Right cardiac atrium (tissue), 5 donors: ENCODE measurements at regions of chr14 and their contacts with region 1.

Region 1: GRCh38 chr14:23320774-23321571 is at the start of gene PABPN1:
- DNase-seq: peak; percentile 98 to 99 (median 98)
- ATAC-seq: peak; percentile 96
- H3K4me3 ChIP-seq: peak within 1 kb of the TSS; percentile 97
- H3K27ac ChIP-seq: peak within 1 kb of the TSS; percentile 99
- H3K4me1 ChIP-seq: peaks cover 4% of the 10 kb centered on the region
- H3K27me3 ChIP-seq: no peaks in the 10 kb centered on the region
- total RNA-seq, gene PABPN1: 93.6 to 97.9 (median 96.4) TPM

Region 2: GRCh38 chr14:23209651-23210423 is 111.1 kb before region 1 on chr14:
- intact Hi-C with region 1: no loop called
- DNase-seq: no peak
- ATAC-seq: no peak
- H3K4me3 ChIP-seq: no peak overlapping the region
- H3K27ac ChIP-seq: no peak overlapping the region
- H3K4me1 ChIP-seq: no peaks in the 10 kb centered on the region
- H3K27me3 ChIP-seq: no peaks in the 10 kb centered on the region

Region 3: GRCh38 chr14:23406244-23406643 is 85.3 kb after region 1 on chr14:
- intact Hi-C with region 1: no loop called
- DNase-seq: peak in 1 of 3 donors; percentile 31
- ATAC-seq: no peak
- H3K4me3 ChIP-seq: peak overlapping the region; percentile 37
- H3K27ac ChIP-seq: peak overlapping the region; percentile 85
- H3K4me1 ChIP-seq: no peaks in the 10 kb centered on the region
- H3K27me3 ChIP-seq: no peaks in the 10 kb centered on the region

Region 4: DNA sequence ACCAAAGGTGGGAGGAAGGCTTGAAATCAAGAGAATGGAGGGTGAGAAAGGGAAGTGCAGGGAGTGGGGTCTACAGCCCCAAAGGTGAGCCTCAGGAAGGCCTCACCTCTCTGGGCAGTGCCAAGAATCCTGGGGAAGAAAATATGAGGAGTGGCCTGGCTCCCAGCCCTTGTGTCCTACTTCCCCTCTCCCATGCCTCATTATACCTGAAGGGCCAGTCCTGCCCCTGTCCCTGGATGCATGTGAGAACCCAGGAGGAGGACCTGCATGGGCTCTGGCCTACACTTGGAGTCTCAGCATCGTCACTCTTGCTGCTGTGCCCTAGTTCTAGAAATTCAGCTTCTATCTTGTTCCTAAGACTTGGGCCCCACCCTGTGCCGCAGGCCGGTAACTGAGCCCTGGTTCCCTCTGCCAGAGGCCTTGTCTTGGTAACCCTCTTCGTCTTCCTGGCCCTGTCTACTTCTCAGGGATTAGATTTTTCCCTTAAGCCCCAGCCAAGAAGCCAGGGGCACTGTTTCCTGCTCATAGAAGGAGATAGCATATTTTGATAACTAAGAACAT is 125.4 kb after region 1 on chr14:
- intact Hi-C with region 1: loop called in 3 of 4 experiments (anchors 5 to 10 kb)
- DNase-seq: peak in 2 of 3 donors; percentile 70 to 80
- ATAC-seq: peak; percentile 54 to 68
- H3K4me3 ChIP-seq: no peak overlapping the region
- H3K27ac ChIP-seq: peak overlapping the region; percentile 69
- H3K4me1 ChIP-seq: peaks cover 2% of the 10 kb centered on the region
- H3K27me3 ChIP-seq: no peaks in the 10 kb centered on the region

Region 5: GRCh38 chr14:23454445-23454856 is 133.5 kb after region 1 on chr14:
- intact Hi-C with region 1: loop called in 3 of 4 experiments (anchors 5 to 10 kb)
- DNase-seq: no peak
- ATAC-seq: peak in 1 of 2 donors; percentile 11
- H3K4me3 ChIP-seq: no peak overlapping the region
- H3K27ac ChIP-seq: no peak overlapping the region
- H3K4me1 ChIP-seq: no peaks in the 10 kb centered on the region
- H3K27me3 ChIP-seq: no peaks in the 10 kb centered on the region

Region 6: DNA sequence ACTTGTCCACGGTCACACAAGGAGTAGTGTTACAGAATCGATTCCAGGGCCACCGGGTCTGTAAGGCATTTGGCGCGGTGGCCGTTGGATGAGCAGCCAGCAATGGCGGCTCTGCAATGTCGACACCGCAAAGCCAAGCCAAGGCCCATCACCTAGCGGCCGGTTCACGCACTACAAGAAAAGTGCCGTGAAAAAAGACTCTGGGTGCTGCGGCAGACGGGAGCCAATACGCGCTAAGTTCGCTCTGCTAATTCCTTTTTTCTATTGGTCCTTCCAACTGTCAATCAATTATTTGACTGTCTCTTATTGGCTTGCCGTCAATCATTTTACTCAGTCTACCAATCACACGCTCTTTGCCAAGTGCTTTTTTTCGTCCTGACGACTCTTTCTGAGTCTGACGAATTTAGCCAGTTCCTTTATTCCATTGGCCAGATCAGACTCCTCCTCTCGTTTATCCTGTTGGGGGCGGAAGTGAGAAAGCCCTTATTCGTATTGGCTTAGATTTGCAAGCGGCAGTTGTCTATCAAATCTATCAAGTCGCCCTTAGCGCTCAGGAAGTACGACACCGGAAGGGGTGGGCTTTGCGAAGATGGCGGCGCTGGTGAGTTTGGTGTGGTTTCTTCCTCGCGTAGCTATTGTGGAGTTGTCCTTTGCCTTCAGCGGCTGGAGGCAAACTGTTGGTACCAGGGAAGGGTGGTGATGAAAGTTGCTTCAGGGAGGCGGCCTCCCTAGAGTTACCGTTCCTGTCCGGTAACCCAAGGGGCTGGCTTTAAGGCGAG is 148.3 kb after region 1 on chr14 and contains the start of gene NGDN:
- intact Hi-C with region 1: loop called in 1 of 4 experiments (anchors 5 kb)
- DNase-seq: peak; percentile 93 to 98 (median 97)
- ATAC-seq: peak; percentile 96
- H3K4me3 ChIP-seq: peak within 1 kb of the TSS; percentile 97
- H3K27ac ChIP-seq: peak within 1 kb of the TSS; percentile 84
- H3K4me1 ChIP-seq: no peaks in the 10 kb centered on the region
- H3K27me3 ChIP-seq: no peaks in the 10 kb centered on the region
- total RNA-seq, gene NGDN: 19.3 to 23.4 (median 21.8) TPM

Region 7: GRCh38 chr14:23539248-23540140 is 218.5 kb after region 1 on chr14:
- intact Hi-C with region 1: loop called in 1 of 4 experiments (anchors 10 kb)
- DNase-seq: no peak
- ATAC-seq: peak; percentile 51 to 64
- H3K4me3 ChIP-seq: no peak overlapping the region
- H3K27ac ChIP-seq: no peak overlapping the region
- H3K4me1 ChIP-seq: no peaks in the 10 kb centered on the region
- H3K27me3 ChIP-seq: no peaks in the 10 kb centered on the region

Region 8: GRCh38 chr14:23567192-23568020 is 246.4 kb after region 1 on chr14 and contains the start of gene AP1G2:
- intact Hi-C with region 1: loop called in 2 of 4 experiments (anchors 10 kb)
- DNase-seq: peak; percentile 86 to 95 (median 95)
- ATAC-seq: peak; percentile 83 to 84
- H3K4me3 ChIP-seq: peak within 1 kb of the TSS; percentile 70
- H3K27ac ChIP-seq: peak within 1 kb of the TSS; percentile 32
- H3K4me1 ChIP-seq: no peaks in the 10 kb centered on the region
- H3K27me3 ChIP-seq: no peaks in the 10 kb centered on the region
- total RNA-seq, gene AP1G2: 13.8 to 17.9 (median 15.4) TPM

Region 9: DNA sequence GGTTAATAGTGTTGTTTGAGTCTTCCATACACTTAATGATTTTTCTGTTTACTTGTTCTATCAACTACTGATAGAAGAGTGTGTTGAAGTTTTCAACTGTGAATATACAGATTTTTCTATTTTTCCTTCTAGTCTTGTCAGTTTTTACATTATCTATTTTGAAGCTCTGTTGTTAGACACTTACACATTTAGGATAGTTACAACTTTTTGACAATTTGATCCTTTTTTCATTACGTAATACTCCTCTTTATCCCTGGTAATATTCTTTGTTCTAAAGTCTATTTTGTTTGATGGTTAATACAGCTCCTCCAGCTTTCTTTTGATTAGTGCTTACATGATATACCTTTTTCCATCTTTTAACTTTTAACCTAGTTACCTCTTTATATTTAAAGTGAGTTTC is 360.4 kb after region 1 on chr14:
- intact Hi-C with region 1: no loop called
- DNase-seq: no peak
- ATAC-seq: no peak
- H3K4me3 ChIP-seq: no peak overlapping the region
- H3K27ac ChIP-seq: no peak overlapping the region
- H3K4me1 ChIP-seq: no peaks in the 10 kb centered on the region
- H3K27me3 ChIP-seq: no peaks in the 10 kb centered on the region